Spleen (tissue), 13 donors: ENCODE measurements at regions of chr1 and their contacts with region 1.

Region 1: DNA sequence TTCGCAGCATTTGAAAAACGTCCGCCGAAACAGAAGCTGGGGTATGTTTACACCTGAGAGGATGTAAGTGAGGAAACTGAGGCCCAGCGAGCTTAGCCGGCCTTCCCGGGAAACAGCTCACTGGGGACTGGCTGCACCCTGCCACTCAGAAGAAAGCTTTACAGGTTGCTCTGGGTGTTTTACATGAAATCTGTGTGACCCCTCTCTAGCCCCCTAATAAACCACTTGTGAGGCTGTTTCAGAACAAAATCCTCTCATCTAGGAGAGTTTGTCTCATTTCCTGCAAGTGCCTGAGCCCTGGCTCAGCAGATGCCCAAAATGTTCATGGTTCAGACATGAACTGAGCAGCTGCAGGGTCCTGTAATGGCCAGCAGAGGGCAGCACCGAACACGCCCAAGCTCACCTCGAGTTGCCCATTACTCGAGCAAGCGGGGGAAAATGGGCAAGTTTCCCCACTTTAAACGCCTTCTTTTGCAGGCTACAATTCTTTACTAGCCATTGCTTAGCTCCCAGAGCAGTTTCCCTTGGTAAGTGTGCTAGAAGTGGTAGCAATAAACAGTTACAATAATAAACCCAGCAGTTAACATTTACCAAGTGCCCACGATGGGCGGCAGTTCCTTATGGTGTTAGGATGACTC is 76.4 kb downstream of the FHAD1 start:
- DNase-seq: peak; percentile 92
- H3K4me3 ChIP-seq: no peak overlapping the region
- H3K27ac ChIP-seq: no peak overlapping the region
- H3K4me1 ChIP-seq: peaks cover 2 to 20% (median 11%) of the 10 kb centered on the region in 6 donors
- H3K27me3 ChIP-seq: peaks cover 0 to 17% (median 0%) of the 10 kb centered on the region in 7 donors
- CTCF ChIP-seq: peak; percentile 91 to 99 (median 97)
- POLR2A ChIP-seq: no peak

Region 2: GRCh38 chr1:15382601-15383518 is 59.4 kb after region 1 on chr1:
- intact Hi-C with region 1: no loop called
- DNase-seq: no peak
- H3K4me3 ChIP-seq: no peak overlapping the region
- H3K27ac ChIP-seq: no peak overlapping the region
- H3K4me1 ChIP-seq: peaks cover 3 to 37% (median 24%) of the 10 kb centered on the region in 6 donors
- H3K27me3 ChIP-seq: peaks cover 0 to 23% (median 0%) of the 10 kb centered on the region in 7 donors
- CTCF ChIP-seq: no peak
- POLR2A ChIP-seq: no peak

Region 3: GRCh38 chr1:15430787-15431570 is 107.5 kb after region 1 on chr1:
- intact Hi-C with region 1: loop called (anchors 2 kb)
- DNase-seq: peak; percentile 92
- H3K4me3 ChIP-seq: no peak overlapping the region
- H3K27ac ChIP-seq: peak overlapping the region in 4 of 8 donors; percentile 13 to 47 (median 32)
- H3K4me1 ChIP-seq: peaks cover 7 to 79% (median 28%) of the 10 kb centered on the region in 6 donors
- H3K27me3 ChIP-seq: no peaks in the 10 kb centered on the region
- CTCF ChIP-seq: peak; percentile 93 to 98 (median 96)
- POLR2A ChIP-seq: no peak